WTC11 (cell line): ENCODE measurements at regions of chr1 and their contacts with region 1.

Region 1: GRCh38 chr1:204565617-204566582 is 49.7 kb downstream of the MDM4 start:
- DNase-seq: peak; percentile 40
- ATAC-seq: peak; percentile 85
- H3K4me3 Mint-ChIP-seq: peak overlapping the region; percentile 53
- H3K27ac Mint-ChIP-seq: peak overlapping the region; percentile 71
- H3K4me1 Mint-ChIP-seq: peaks cover 54% of the 10 kb centered on the region
- H3K27me3 Mint-ChIP-seq: peaks cover 6% of the 10 kb centered on the region
- CTCF ChIP-seq: peak; percentile 68

Region 2: GRCh38 chr1:204368996-204369726 is 196.7 kb before region 1 on chr1:
- CTCF ChIA-PET with region 1: no interaction called
- POLR2A ChIA-PET with region 1: no interaction called
- DNase-seq: no peak
- ATAC-seq: no peak
- H3K4me3 Mint-ChIP-seq: no peak overlapping the region
- H3K27ac Mint-ChIP-seq: no peak overlapping the region
- H3K4me1 Mint-ChIP-seq: no peaks in the 10 kb centered on the region
- H3K27me3 Mint-ChIP-seq: no peaks in the 10 kb centered on the region; the same call in none of the 2 replicates
- CTCF ChIP-seq: no peak

Region 3: DNA sequence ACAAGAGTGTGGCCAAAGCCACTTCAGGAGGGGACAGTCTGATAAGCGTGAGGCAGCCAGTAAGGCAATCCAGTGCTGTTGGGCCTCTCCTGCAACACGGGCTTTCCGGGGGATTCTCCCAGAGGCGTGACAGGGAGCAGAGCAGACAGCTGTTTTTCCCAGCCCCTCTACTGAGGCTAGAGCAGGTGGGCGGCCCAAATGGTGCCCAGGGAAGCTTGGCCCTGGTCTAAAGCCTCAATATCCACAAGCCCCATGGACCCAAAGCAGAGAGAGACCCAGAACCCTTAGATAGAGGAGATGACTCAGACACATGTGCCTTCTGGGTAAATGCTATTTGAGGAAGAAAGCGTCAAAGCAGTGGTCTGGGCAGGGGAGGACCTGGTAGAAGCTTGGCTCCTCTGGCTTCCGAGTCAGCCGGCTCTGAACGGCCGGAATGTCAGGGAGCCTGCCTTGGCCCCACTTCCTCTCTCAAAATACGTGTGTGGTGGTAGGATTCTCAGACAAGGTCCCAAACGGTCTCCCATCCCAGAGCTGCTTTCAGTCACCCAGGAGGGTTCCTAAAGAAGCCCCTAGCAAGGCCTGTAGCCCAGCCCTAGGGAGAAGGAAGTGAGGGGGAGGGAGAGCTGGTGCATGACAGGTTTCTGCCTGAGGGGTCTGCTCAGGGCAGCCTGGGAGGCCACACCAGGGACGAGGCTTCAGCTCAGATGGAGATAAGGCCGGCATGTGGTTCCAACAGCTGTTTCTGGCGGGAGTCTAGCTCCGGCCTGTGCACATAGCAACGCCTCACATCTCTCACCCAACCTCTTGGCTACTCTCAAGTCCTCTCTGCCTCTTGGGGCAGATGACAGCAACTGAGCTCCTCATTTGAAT is 100.1 kb before region 1 on chr1:
- CTCF ChIA-PET with region 1: no interaction called
- POLR2A ChIA-PET with region 1: no interaction called
- DNase-seq: no peak
- ATAC-seq: no peak
- H3K4me3 Mint-ChIP-seq: no peak overlapping the region
- H3K27ac Mint-ChIP-seq: peak overlapping the region; percentile 54; the same call in 1 of the 2 replicates
- H3K4me1 Mint-ChIP-seq: peaks cover 11% of the 10 kb centered on the region; the same call in 1 of the 2 replicates
- H3K27me3 Mint-ChIP-seq: no peaks in the 10 kb centered on the region
- CTCF ChIP-seq: no peak

Region 4: DNA sequence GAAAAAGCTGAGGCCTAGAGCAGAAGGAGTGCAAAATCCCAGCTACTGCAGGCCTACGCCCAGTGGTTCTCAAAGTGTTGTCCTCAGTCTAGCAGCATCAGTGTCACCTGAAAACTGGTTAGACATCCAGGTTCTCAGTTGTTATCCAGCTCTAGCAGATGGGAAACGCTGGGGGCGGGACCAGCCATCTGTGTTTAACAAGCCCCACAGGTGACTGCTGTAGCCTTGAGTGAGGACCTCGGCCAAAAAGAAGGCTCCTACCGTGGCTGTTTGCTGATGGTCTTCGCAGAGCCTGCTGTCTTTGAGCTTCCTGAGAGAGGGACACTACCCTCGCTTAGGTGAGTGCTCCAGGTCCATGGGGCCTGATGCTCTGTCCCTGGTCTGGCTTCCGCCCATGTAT is 50.0 kb after region 1 on chr1:
- CTCF ChIA-PET with region 1: interaction called, 10 read pairs
- POLR2A ChIA-PET with region 1: interaction called, 4 read pairs
- DNase-seq: no peak
- ATAC-seq: no peak
- H3K4me3 Mint-ChIP-seq: no peak overlapping the region
- H3K27ac Mint-ChIP-seq: no peak overlapping the region
- H3K4me1 Mint-ChIP-seq: peaks cover 14% of the 10 kb centered on the region
- H3K27me3 Mint-ChIP-seq: no peaks in the 10 kb centered on the region; the same call in 1 of the 2 replicates
- CTCF ChIP-seq: no peak

Region 5: GRCh38 chr1:204640578-204640977 is 74.7 kb after region 1 on chr1:
- CTCF ChIA-PET with region 1: interaction called, 12 read pairs
- POLR2A ChIA-PET with region 1: no interaction called
- DNase-seq: no peak
- ATAC-seq: peak; percentile 60
- H3K4me3 Mint-ChIP-seq: no peak overlapping the region
- H3K27ac Mint-ChIP-seq: no peak overlapping the region; the same call in 1 of the 2 replicates
- H3K4me1 Mint-ChIP-seq: no peaks in the 10 kb centered on the region
- H3K27me3 Mint-ChIP-seq: peaks cover 18% of the 10 kb centered on the region
- CTCF ChIP-seq: no peak

Region 6: DNA sequence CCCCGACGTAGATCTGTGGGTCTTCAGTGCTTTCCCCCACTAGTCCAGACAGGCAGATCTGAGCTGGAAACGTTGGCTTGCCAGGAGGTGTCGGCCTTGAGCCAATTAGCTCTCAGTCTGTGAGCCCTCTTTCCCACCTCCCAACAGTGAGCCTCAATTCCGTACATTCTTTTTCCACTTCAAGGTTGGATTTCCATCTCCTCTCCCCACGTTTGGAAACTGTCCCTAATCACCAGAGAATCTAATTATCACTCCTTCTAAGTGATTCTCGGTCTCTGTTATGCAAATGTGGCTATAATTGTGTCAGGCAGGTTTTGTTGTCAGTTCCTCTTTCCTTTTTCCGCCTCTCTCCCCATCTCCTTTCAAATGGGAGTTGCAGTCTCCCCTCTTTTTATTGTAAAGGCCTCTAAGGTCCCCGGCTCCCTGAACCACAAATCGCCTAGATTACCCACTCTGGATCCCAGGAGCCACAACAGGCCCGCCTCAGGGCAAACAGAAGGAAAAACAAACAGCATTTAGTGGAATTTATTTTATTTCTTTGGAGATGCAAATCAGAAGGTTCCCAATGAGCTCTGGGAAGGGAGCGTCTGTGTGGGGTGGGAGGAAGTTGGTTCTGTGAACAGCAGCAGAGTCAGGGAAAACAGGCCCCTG is 149.1 kb after region 1 on chr1:
- CTCF ChIA-PET with region 1: interaction called, 20 read pairs
- POLR2A ChIA-PET with region 1: no interaction called
- DNase-seq: peak; percentile 68
- ATAC-seq: peak; percentile 55
- H3K4me3 Mint-ChIP-seq: peak overlapping the region; percentile 50
- H3K27ac Mint-ChIP-seq: peak overlapping the region; percentile 86
- H3K4me1 Mint-ChIP-seq: peaks cover 66% of the 10 kb centered on the region
- H3K27me3 Mint-ChIP-seq: peaks cover 94% of the 10 kb centered on the region
- CTCF ChIP-seq: no peak

Region 7: DNA sequence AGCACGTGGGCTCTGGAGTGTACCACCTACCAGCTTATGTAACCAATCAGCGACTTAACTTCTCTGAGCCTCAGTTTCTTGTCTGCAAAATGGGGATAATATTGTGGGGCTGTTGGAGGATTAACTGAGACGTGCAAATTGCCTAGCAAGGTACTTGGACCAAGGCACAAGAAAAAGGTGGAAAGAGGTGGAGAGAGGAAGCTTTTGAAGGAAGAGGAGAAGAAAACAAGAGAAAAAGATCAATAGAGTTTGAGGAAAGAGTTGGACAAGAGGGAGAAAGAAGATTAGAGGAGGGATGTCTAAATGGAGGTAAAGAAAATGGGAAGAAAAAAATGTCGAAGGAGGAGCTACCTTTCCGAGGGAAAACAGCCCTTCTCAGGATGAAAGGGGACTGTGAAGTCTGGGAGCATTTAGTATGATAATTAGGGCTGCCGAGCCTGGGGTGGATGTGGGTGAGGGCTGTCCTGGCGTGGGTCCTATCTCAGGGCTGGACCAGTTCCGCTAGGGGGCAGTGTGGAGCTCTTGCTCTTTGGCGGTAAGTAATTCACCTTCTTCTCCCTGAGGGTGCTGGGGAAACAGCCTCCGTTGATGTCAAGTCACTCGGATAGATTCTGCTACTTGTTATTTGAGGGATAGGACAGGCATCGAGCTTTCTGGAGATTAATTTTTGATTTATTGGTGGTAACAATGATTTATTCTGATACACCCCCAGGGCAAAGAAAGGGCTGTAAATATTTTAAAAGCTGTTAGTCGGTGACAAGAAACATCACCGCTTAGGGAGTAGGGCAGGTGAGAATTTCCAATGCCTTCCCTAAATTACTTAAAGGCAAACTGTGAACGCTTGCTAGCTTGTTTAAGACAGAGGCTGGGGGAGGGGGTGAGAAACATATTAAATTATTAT is 225.8 kb after region 1 on chr1:
- CTCF ChIA-PET with region 1: interaction called, 32 read pairs
- POLR2A ChIA-PET with region 1: no interaction called
- DNase-seq: peak; percentile 95
- ATAC-seq: peak; percentile 96
- H3K4me3 Mint-ChIP-seq: no peak overlapping the region
- H3K27ac Mint-ChIP-seq: no peak overlapping the region
- H3K4me1 Mint-ChIP-seq: peaks cover 12% of the 10 kb centered on the region
- H3K27me3 Mint-ChIP-seq: peaks cover 11% of the 10 kb centered on the region
- CTCF ChIP-seq: peak; percentile 90